ENCODE measurements at regions of chr5 and their contacts with region 1.

Region 1: DNA sequence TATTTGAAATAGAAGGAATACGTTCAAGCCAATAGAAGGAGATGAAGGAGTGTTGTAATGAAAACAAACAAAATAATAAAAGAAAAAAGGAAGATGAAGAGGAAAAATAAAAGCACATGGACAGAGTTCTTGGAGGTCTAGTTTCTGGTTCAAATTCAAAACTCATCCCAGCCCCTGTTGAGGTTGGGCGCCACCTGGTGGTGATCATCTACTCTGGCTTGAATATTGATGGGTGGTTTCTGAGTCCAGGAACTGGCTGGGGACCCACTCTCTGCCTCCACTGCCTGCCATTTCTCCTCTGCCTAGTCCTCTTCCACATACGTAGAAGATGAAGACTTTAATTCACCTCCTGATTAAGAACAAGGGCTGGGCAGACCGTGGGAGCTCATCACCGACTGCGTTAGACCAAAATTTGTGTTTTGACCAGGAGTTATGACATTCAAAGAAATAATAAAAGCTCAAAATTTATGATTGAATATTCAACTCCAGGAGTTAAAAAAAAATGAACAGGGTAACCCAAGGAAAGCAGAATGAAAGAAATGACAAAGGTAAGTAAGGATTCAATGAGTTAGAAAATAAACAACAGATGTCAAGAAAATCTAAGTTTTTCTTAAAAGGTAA is 99.0 kb upstream of the SLC1A3 start:
- DNase-seq: peak; percentile 91
- H3K4me3 Mint-ChIP-seq: no peak overlapping the region
- H3K27ac Mint-ChIP-seq: no peak overlapping the region
- H3K4me1 Mint-ChIP-seq: peaks cover 2% of the 10 kb centered on the region
- H3K27me3 Mint-ChIP-seq: peaks cover 10% of the 10 kb centered on the region

Region 2: DNA sequence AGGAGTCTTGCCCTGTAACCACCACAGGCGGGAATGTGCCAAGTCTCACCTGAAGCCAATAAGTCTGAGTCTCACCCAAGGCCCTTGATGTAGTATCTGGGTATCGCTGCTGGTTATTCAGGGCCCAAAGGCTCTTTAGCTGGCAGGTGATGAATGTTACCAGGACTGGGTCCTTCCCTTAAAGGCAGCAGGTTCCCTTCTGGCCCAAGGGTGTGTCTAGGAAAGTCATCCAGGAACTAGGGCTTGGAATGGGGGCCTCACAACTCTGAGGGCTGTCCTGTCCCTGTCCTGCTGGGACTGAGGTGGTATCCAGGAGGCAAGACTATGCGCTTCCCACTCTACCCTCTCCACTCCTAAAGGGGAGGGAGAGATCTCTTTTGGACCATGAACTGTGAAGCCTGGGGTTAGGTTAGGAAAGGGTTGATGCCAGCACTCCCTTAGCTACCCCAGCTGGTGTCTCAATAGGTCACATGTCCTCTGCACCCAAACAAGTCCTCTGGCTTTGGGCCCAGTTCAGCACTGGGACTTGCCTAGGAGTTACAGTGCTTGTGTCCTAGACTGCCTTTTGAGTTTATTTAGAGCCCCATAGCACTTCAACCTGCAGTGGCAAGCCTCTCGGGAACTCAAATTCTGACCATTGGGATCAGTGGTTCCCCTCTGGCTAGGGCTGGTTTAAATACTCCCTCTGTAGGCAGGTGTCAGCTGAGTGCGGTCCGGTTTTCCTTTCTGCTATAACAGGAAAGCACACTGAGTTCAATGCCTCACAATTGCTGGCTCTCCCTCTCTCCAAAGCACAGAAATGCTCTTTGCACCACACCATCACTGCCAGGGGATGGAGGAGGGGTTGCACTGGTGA is 183.3 kb before region 1 on chr5:
- intact Hi-C with region 1: no loop called
- DNase-seq: no peak
- H3K4me3 Mint-ChIP-seq: no peak overlapping the region
- H3K27ac Mint-ChIP-seq: no peak overlapping the region
- H3K4me1 Mint-ChIP-seq: no peaks in the 10 kb centered on the region
- H3K27me3 Mint-ChIP-seq: no peaks in the 10 kb centered on the region

Region 3: GRCh38 chr5:36414869-36415282 is 92.6 kb before region 1 on chr5:
- intact Hi-C with region 1: loop called (anchors 1 kb)
- DNase-seq: no peak
- H3K4me3 Mint-ChIP-seq: no peak overlapping the region
- H3K27ac Mint-ChIP-seq: no peak overlapping the region
- H3K4me1 Mint-ChIP-seq: peaks cover 5% of the 10 kb centered on the region
- H3K27me3 Mint-ChIP-seq: peaks cover 6% of the 10 kb centered on the region

Region 4: GRCh38 chr5:36537709-36538108 is 30.3 kb after region 1 on chr5:
- intact Hi-C with region 1: no loop called
- DNase-seq: no peak
- H3K4me3 Mint-ChIP-seq: no peak overlapping the region
- H3K27ac Mint-ChIP-seq: no peak overlapping the region
- H3K4me1 Mint-ChIP-seq: no peaks in the 10 kb centered on the region
- H3K27me3 Mint-ChIP-seq: peaks cover 3% of the 10 kb centered on the region

Region 5: GRCh38 chr5:37086466-37087173 is 579.2 kb after region 1 on chr5:
- intact Hi-C with region 1: no loop called
- DNase-seq: no peak
- H3K4me3 Mint-ChIP-seq: no peak overlapping the region
- H3K27ac Mint-ChIP-seq: no peak overlapping the region
- H3K4me1 Mint-ChIP-seq: peaks cover 2% of the 10 kb centered on the region
- H3K27me3 Mint-ChIP-seq: no peaks in the 10 kb centered on the region

Measured in activated CD4-positive, alpha-beta T cell treated with anti-CD3 and anti-CD28 coated beads, Interleukin-2, amount 10 ng/mL, durations not matched to agents 24 days and 14 days (primary cell).